ENCODE measurements at regions of chr19 and their contacts with region 1.

Region 1: GRCh38 chr19:8321060-8321985 is at the starts of genes NDUFA7 and RPS28:
- DNase-seq: peak; percentile 93 to 95
- H3K4me3 ChIP-seq: peak within 1 kb of the TSS; percentile 79
- H3K4me3 Mint-ChIP-seq: peak within 1 kb of the TSS; percentile 100
- H3K27ac Mint-ChIP-seq: peak within 1 kb of the TSS; percentile 99
- H3K4me1 ChIP-seq: peaks cover 9% of the 10 kb centered on the region
- H3K4me1 Mint-ChIP-seq: peaks cover 7% of the 10 kb centered on the region
- H3K27me3 ChIP-seq: no peaks in the 10 kb centered on the region
- H3K27me3 Mint-ChIP-seq: no peaks in the 10 kb centered on the region
- CTCF ChIP-seq: peak in 1 of 2 experiments; percentile 0
- total RNA-seq, gene NDUFA7: 43.7 and 50.2 TPM in 2 replicates
- total RNA-seq, gene RPS28: 1,515 and 1,601 TPM in 2 replicates

Region 2: DNA sequence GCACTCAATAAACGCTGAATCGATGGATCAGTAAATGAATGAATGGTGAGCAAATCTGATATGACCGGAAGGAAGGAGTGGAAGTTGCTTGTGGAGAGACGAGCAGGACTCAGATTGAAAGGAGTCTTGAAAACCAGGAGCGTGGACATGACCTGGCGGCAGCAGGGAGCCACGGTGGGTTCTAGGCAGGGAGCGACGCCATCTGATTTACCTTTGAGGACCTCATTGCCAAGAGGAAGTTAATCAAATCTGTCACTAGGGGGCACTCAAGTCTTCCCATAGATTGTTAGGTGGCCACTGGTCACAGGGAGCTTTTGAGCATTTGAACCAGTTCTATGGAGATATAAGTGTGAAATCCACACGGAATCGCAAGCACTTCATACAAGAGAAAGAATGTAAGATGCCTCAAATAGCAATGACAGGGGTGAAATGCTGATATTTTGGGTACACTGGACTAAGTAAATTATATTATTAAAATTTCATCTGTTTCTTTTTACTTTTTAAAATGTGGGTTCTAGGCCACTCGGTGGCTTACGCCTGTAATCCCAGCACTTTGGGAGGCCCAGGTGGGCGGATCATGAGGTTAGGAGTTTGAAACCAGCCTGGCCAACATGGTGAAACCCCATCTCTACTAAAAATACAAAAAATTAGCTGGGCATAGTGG is 162.8 kb before region 1 on chr19:
- CTCF ChIA-PET with region 1: no interaction called
- POLR2A ChIA-PET with region 1: no interaction called
- intact Hi-C with region 1: loop called (anchors 2 kb)
- DNase-seq: peak; percentile 71 to 79
- H3K4me3 ChIP-seq: no peak overlapping the region
- H3K4me3 Mint-ChIP-seq: no peak overlapping the region
- H3K27ac Mint-ChIP-seq: no peak overlapping the region
- H3K4me1 ChIP-seq: peaks cover 3% of the 10 kb centered on the region; the same call in 1 of the 2 replicates
- H3K4me1 Mint-ChIP-seq: no peaks in the 10 kb centered on the region
- H3K27me3 ChIP-seq: no peaks in the 10 kb centered on the region
- H3K27me3 Mint-ChIP-seq: no peaks in the 10 kb centered on the region
- CTCF ChIP-seq: peak; percentile 59 to 72

Region 3: DNA sequence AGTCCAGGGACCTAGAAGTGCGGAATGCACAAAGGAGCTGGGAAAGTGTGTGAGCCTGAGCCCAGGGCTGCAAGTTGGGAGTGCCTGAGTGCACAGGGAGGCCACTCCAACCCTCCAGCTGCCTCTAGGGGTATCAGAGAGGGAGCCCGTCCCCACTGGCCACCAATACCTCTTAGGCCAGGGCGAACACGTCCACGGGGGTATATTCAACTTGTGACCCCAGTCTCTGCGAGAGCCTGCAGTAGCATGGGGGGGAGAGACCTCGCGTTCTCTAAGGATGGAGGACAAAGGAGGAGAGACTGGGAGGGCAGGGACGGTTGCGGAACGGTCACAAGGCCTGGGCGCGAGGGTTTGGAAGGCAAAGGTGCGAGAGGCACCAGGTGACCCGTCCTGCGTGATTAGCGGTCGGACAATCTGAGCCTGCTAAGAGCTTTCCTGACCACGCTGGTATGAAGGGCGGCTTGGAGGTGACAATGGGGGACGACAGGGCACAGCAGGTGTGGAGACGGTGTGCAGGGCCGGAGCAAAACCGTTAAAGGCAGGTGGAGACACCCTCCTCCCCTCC is 13.8 kb before region 1 on chr19:
- CTCF ChIA-PET with region 1: no interaction called
- POLR2A ChIA-PET with region 1: interaction called, 12 read pairs
- intact Hi-C with region 1: no loop called
- DNase-seq: peak in 1 of 2 experiments; percentile 47
- H3K4me3 ChIP-seq: peak overlapping the region; percentile 85
- H3K4me3 Mint-ChIP-seq: peak overlapping the region; percentile 91
- H3K27ac Mint-ChIP-seq: peak overlapping the region; percentile 96
- H3K4me1 ChIP-seq: no peaks in the 10 kb centered on the region
- H3K4me1 Mint-ChIP-seq: peaks cover 13% of the 10 kb centered on the region
- H3K27me3 ChIP-seq: no peaks in the 10 kb centered on the region
- H3K27me3 Mint-ChIP-seq: no peaks in the 10 kb centered on the region
- CTCF ChIP-seq: no peak

Measured in Caco-2 (cell line).